Gastrocnemius medialis (tissue), 4 donors: ENCODE measurements at regions of chr19 and their contacts with region 1.

Region 1: DNA sequence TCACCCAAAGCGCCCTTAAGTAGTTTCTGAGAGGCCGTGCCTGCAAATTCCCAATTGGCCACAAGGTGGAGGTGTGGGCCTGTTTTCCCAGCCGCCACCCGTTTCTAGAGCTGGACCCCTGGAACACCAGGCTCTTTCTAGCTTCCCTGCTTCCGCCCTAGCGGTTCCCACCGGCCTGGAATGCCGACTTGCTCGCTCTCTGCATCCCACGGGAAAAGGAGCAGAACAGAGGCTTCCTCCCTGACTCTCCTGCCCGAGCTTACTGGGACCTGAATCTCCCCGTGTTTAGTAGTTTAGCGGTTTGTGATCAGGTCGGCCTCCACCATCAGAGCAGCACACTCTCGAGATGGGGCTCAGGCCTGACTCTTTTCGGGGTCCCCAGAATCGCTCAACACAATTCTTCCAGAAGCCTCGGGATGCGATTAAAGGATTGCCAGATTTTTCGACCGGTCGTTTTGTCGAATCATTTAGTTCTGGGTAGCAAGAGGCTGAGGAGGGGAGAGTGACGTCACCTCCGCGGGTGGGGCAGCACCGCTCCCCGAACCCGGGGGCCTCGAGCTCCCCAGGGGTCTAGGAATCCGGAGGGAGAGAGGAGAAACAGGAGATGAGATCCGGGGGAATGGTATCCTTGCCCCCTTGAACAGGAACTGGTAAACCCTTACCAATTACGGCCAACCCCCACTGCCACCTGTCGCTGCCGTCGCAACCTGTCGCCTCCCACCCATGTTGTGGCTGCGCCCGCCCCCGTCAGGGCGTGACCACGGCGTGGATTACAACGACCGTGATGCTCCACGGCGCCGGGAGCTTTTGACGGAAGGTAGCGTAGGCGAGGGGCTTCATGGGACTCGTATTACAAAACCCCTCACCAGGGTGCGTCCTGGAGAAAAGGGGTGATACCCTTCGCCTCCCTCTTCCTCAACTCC is 8.0 kb downstream of the NAPSA start:
- DNase-seq: peak in 1 of 2 donors; percentile 68
- ATAC-seq: peak; percentile 80 to 91
- H3K4me3 ChIP-seq: peak overlapping the region; percentile 44 to 74 (median 66)
- H3K27ac ChIP-seq: peak overlapping the region; percentile 56 to 82 (median 78)
- H3K4me1 ChIP-seq: peaks cover 0 to 6% of the 10 kb centered on the region in 2 donors
- H3K27me3 ChIP-seq: no peaks in the 10 kb centered on the region
- CTCF ChIP-seq: peak; percentile 79 to 90 (median 88)
- POLR2A ChIP-seq: peak; percentile 7 to 8

Region 2: GRCh38 chr19:50414864-50415660 is 57.6 kb after region 1 on chr19:
- in situ Hi-C with region 1: loop called in 2 of 4 experiments (anchors 10 kb)
- intact Hi-C with region 1: loop called (anchors 1 kb)
- DNase-seq: peak; percentile 47 to 58
- ATAC-seq: peak; percentile 55 to 74
- H3K4me3 ChIP-seq: no peak overlapping the region
- H3K27ac ChIP-seq: no peak overlapping the region
- H3K4me1 ChIP-seq: peaks cover 0 to 8% of the 10 kb centered on the region in 2 donors
- H3K27me3 ChIP-seq: peaks cover 0 to 14% (median 11%) of the 10 kb centered on the region in 3 donors
- CTCF ChIP-seq: peak; percentile 46 to 87 (median 83)
- POLR2A ChIP-seq: no peak

Region 3: GRCh38 chr19:50461066-50461875 is 103.8 kb after region 1 on chr19:
- in situ Hi-C with region 1: loop called in 1 of 4 experiments (anchors 25 kb)
- intact Hi-C with region 1: no loop called
- DNase-seq: peak in 1 of 2 donors; percentile 59
- ATAC-seq: peak; percentile 55 to 67
- H3K4me3 ChIP-seq: no peak overlapping the region
- H3K27ac ChIP-seq: peak overlapping the region in 1 of 4 donors; percentile 46
- H3K4me1 ChIP-seq: peaks cover 0 to 8% of the 10 kb centered on the region in 2 donors
- H3K27me3 ChIP-seq: peaks cover 7 to 9% (median 9%) of the 10 kb centered on the region in 3 donors
- CTCF ChIP-seq: peak; percentile 67 to 82 (median 76)
- POLR2A ChIP-seq: no peak

Region 4: DNA sequence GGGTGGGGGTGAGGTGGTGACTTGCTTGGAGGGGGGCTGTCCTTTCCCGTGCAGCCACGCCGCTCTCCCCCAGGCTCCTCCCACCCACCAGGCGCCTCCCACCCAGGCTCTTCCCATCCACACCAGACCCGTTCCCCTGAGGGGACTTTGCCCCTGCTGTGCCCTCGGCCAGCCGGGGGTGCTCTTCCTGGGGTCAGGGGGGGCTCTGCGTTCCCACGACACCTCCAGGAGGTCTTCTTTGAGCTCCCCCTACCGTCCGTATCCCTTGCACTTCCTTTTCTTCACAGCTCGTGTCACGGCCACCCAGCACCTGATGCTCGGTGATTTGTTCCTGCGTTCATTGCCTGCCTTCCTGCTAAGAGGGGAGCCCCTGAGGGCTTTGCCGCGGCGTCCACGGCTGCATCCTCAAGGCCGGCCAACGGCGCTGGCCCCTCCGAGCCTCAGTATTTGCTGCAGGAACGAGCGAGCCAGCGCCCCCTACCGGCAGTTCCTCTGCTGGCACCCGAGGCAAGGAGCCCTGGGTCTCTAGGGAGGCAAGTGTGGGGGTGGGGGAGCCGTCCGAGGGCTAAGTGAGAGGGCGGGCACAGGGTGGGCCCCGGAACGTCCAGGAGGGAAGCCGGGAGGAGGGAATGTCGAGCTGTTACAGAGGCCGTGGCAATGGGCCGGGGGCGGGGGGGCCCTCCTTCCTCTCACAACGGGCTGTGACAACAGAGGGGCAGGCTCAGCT is 199.0 kb after region 1 on chr19:
- in situ Hi-C with region 1: no loop called
- intact Hi-C with region 1: loop called (anchors 2 kb)
- DNase-seq: peak in 1 of 2 donors; percentile 51
- ATAC-seq: peak in 1 of 2 donors; percentile 62
- H3K4me3 ChIP-seq: peak overlapping the region; percentile 36 to 49 (median 42)
- H3K27ac ChIP-seq: no peak overlapping the region
- H3K4me1 ChIP-seq: peaks cover 0 to 11% of the 10 kb centered on the region in 2 donors
- H3K27me3 ChIP-seq: peaks cover 42 to 74% (median 54%) of the 10 kb centered on the region in 3 donors
- CTCF ChIP-seq: peak; percentile 34 to 79 (median 69)
- POLR2A ChIP-seq: no peak

Region 5: DNA sequence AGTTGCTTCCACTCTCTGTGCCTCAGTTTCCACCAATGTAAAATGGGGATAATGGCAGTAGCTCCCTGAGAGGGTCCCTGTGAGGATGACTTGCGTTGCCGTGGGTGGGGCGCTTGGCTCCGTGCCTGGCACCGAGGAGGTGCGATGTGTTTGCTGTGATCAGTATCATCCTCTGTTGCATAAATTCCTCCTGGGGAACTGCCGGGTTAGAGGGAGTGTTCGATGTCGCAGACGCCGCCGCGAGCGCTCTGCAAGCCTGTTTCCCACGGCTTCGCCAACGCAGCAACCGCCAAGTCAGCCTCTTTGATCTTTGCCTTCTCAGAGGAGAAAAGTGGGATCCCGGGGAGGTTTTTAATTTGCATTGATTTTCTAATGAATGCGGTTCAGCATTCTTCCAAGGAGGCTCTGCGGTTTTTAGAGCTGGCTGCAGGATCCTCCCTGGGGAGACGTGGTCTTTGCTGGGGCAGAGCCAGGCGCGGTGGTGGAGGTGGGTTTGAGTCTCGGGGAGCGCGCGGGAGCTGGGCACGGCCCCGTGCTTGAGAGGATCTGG is 420.4 kb after region 1 on chr19:
- in situ Hi-C with region 1: loop called in 3 of 4 experiments (anchors 10 kb)
- intact Hi-C with region 1: loop called (anchors 2 kb)
- DNase-seq: no peak
- ATAC-seq: no peak
- H3K4me3 ChIP-seq: no peak overlapping the region
- H3K27ac ChIP-seq: no peak overlapping the region
- H3K4me1 ChIP-seq: no peaks in the 10 kb centered on the region
- H3K27me3 ChIP-seq: peaks cover 42 to 55% (median 54%) of the 10 kb centered on the region in 3 donors
- CTCF ChIP-seq: no peak
- POLR2A ChIP-seq: no peak

Region 6: DNA sequence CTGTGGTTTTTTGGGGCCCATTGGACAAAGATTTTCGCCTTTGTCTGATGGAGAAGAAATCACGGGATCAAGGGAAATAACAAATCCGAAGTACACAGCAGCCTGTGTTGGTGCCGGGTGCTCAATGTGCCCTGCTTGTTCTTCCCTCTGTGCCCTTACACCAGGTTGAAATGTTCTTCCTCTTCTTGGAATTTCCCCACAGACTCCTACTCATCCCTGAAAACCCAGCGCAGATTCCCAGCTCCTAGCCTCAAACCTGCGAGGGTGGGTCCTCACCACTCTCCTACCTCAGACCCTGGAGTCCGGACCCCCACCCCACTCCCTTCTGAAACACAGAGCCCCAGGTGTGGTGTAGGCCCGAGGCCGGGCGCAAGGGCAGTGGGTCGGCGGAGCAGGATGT is 427.9 kb after region 1 on chr19:
- in situ Hi-C with region 1: loop called (anchors 5 to 10 kb)
- intact Hi-C with region 1: loop called (anchors 2 kb)
- DNase-seq: no peak
- ATAC-seq: no peak
- H3K4me3 ChIP-seq: no peak overlapping the region
- H3K27ac ChIP-seq: no peak overlapping the region
- H3K4me1 ChIP-seq: no peaks in the 10 kb centered on the region
- H3K27me3 ChIP-seq: peaks cover 7 to 14% (median 11%) of the 10 kb centered on the region in 3 donors
- CTCF ChIP-seq: no peak
- POLR2A ChIP-seq: no peak

Region 7: DNA sequence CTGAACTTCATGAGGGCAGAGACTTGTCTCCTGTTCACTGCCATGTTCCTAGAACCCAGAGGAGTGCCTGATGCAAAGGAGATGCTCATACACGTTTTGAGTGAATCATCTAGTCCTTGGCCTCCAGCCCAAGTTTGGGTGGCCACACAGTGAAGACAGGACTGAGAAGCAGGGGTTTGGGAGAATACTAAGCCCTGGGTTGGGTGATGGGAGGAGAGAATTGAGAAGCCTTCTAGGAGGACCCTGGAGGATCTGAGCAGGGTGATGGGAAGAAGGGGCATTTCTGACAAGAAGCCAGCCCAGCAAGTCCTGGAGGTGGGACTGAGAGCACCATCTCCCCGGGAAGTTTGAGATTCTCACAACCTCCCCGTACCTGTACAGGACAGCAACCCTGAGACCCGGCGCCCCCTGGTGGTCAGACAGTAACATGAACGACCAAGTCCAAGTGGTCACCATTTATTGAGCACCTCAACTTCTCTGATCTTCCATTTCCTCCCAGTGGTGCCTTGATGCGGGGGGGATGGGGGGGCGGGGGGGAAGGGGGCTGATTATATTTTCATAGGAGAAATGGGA is 739.8 kb after region 1 on chr19:
- in situ Hi-C with region 1: no loop called
- intact Hi-C with region 1: loop called (anchors 5 kb)
- DNase-seq: no peak
- ATAC-seq: no peak
- H3K4me3 ChIP-seq: no peak overlapping the region
- H3K27ac ChIP-seq: no peak overlapping the region
- H3K4me1 ChIP-seq: peaks cover 3 to 6% of the 10 kb centered on the region in 2 donors
- H3K27me3 ChIP-seq: no peaks in the 10 kb centered on the region
- CTCF ChIP-seq: peak in 4 of 5 experiments; percentile 14 to 55 (median 38)
- POLR2A ChIP-seq: no peak